Activated CD4-positive, alpha-beta T cell treated with anti-CD3 and anti-CD28 coated beads for 36 hours (primary cell): ENCODE measurements at regions of chr9 and their contacts with region 1.

Region 1: DNA sequence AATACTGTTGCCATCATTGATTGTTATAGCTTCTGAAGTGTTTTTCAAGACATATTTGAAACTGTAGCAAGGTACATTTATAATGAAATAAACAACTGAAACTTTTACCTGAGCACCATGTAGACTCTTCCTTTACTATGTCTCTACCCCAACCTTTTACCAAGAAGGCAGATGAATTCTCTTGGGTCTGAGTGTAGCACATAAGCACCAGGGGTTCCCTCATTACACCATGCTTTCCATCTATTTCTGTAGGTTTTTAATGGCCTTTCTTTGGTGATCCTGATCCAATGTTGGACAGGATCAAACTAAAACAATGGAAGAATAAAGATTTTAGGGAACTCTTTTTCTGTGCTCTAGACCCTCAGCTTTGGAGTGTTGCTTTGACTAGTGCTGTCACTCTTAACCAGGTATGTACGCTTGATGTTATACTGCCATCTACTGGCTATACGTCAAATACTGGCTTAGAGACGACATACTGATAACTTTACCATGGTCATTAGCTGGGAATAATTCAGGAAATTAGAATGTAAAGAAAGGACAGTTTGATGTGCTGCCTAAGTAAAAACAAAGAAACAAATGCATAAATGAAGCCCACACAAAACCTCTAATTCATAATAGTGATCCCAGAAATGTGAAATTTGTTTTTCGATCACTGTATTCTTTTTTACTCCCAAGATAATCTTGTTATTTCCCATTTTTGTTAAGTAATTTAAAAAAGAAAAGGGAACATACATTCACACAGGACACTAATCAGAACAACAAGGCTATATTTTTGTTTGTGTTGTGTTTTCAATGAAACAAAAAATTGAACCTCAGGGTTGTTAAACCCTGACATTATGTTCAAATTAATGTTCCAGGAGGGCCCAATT is 30.7 kb downstream of the IFNW1 start:
- DNase-seq: no peak
- ATAC-seq: peak; percentile 75
- H3K4me3 Mint-ChIP-seq: no peak overlapping the region
- H3K27ac Mint-ChIP-seq: no peak overlapping the region
- H3K4me1 Mint-ChIP-seq: no peaks in the 10 kb centered on the region
- H3K27me3 Mint-ChIP-seq: no peaks in the 10 kb centered on the region

Region 2: DNA sequence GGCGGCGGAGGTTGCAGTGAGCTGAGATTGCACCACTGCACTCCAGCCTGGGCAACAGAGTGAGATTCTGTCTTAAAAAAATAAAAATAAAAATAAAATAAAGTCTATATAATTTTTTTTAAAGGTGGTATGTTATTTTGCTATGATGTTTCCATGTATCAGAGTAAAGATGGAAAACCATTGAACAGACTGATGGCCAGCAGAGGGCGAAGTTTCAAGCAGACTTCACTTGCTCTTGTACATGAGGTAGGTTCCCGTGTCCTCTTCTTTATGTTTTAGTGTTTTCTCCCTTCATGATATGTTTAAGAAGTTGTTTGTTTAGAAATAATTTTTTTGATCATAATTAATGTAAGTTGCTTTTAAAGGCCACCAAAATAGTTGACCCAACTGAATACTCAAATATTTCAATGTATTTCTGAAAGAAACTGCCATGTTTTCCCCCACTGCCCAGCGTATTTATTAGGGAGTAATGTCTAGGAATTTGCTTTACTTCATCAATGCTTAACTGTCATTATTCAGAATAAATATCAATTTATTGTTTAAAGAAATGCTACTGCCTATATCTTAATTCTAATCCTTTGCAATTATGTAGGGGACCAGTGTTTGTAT is 225.9 kb before region 1 on chr9:
- CTCF ChIA-PET with region 1: interaction called, 53 read pairs
- POLR2A ChIA-PET with region 1: no interaction called
- intact Hi-C with region 1: loop called (anchors 1 kb)
- DNase-seq: peak; percentile 78
- ATAC-seq: peak; percentile 58
- H3K4me3 Mint-ChIP-seq: no peak overlapping the region
- H3K27ac Mint-ChIP-seq: no peak overlapping the region
- H3K4me1 Mint-ChIP-seq: no peaks in the 10 kb centered on the region
- H3K27me3 Mint-ChIP-seq: no peaks in the 10 kb centered on the region

Region 3: GRCh38 chr9:20941174-20941690 is 169.7 kb before region 1 on chr9:
- CTCF ChIA-PET with region 1: interaction called, 38 read pairs
- POLR2A ChIA-PET with region 1: no interaction called
- intact Hi-C with region 1: loop called (anchors 1 kb)
- DNase-seq: peak; percentile 68
- ATAC-seq: peak; percentile 98
- H3K4me3 Mint-ChIP-seq: no peak overlapping the region
- H3K27ac Mint-ChIP-seq: no peak overlapping the region
- H3K4me1 Mint-ChIP-seq: peaks cover 3% of the 10 kb centered on the region
- H3K27me3 Mint-ChIP-seq: no peaks in the 10 kb centered on the region

Region 4: DNA sequence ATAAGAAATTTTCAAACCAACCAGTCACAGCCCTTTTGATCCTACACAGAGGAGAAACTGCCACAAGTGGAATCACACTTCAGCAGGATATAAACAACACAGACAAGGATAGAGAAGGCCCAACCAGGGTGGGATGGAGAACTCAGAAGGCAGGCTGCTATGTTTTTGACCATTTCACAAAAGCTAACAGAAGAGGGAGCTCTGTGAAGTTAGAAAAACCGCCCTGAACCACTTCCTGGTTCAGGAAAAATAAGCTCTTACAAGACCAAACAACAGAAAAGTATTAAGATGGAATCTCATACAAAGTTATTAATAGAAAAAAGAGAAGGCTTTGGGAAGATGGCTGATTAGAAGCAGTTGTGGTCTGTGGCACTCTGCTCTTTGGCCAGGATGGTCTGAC is 32.2 kb before region 1 on chr9:
- CTCF ChIA-PET with region 1: interaction called, 22 read pairs
- POLR2A ChIA-PET with region 1: no interaction called
- intact Hi-C with region 1: loop called (anchors 1 kb)
- DNase-seq: no peak
- ATAC-seq: peak; percentile 42
- H3K4me3 Mint-ChIP-seq: no peak overlapping the region
- H3K27ac Mint-ChIP-seq: no peak overlapping the region
- H3K4me1 Mint-ChIP-seq: peaks cover 28% of the 10 kb centered on the region
- H3K27me3 Mint-ChIP-seq: no peaks in the 10 kb centered on the region

Region 5: GRCh38 chr9:21096172-21096900 is 14.6 kb before region 1 on chr9:
- CTCF ChIA-PET with region 1: interaction called, 13 read pairs
- POLR2A ChIA-PET with region 1: no interaction called
- intact Hi-C with region 1: no loop called
- DNase-seq: peak; percentile 64
- ATAC-seq: peak; percentile 95
- H3K4me3 Mint-ChIP-seq: peak overlapping the region; percentile 58
- H3K27ac Mint-ChIP-seq: peak overlapping the region; percentile 87
- H3K4me1 Mint-ChIP-seq: peaks cover 31% of the 10 kb centered on the region
- H3K27me3 Mint-ChIP-seq: no peaks in the 10 kb centered on the region

Region 6: DNA sequence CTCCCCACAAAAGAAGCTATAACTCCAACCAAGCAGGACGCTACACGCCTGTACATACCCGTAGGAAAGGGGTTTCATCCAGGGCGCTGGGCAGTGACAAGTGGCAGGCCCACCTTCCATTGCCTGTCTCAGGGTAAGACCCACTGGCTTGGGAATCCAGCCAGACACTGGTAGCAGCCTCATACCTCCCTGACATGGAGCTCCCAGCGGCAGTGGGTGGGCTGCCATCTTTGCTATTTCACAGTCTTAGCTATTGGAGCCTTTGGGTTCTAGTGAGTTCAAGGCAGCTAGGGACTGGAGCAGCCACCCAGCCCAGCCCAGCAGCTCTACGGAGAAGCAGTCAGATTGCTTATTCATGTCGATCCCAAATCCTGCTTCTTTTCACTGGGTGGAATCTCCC is 99.4 kb after region 1 on chr9:
- CTCF ChIA-PET with region 1: no interaction called
- POLR2A ChIA-PET with region 1: interaction called, 11 read pairs
- intact Hi-C with region 1: no loop called
- DNase-seq: no peak
- ATAC-seq: no peak
- H3K4me3 Mint-ChIP-seq: no peak overlapping the region
- H3K27ac Mint-ChIP-seq: no peak overlapping the region
- H3K4me1 Mint-ChIP-seq: peaks cover 8% of the 10 kb centered on the region
- H3K27me3 Mint-ChIP-seq: peaks cover 14% of the 10 kb centered on the region